ENCODE measurements at regions of chr2 and their contacts with region 1.

Region 1: DNA sequence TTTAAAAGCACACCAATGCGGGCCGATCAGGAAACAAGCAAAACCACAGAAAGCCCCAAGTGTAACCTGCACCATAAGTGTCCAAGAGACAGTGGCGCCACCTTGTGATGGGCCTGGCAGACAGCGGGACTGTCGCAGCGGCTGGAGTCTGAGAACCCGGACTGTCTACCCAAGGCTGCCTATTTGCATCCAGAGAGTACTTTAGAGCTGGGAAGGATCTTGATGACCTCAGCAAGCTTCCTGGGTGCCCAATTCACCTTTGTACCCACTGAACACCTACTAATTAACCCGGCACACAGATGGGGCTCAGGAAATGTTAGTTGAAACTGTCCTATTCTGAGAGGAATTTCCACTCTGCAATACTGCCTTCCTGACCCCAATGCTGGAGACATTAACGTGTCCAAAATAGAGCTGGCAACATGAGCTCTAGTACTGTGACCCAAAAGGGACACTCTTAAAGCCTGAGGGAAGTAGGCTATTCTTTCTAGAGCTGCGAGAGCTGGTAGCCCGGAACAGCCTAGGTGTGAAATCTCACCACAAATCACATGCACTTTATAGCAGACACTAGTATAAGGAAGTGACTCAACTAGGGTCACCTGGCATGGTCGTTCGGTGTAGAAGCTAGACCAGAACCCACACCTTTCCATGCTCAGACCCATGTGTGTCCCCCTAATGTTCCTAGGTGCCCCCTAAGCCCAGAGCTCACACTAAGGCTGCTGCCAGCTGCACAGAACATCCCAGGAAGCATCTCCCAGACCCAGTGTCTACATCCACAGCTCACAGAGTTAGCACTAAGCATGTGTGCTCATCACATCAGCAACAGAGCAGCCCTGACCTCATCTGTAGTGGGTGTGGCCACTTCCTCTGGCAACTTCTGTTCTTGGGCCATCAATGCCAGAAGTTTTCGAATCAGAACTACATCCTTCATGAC is 25.4 kb downstream of the POLR1A start:
- DNase-seq: peak; percentile 92
- H3K4me3 Mint-ChIP-seq: no peak overlapping the region
- H3K27ac Mint-ChIP-seq: peak overlapping the region; percentile 81
- H3K4me1 Mint-ChIP-seq: peaks cover 45% of the 10 kb centered on the region
- H3K27me3 Mint-ChIP-seq: no peaks in the 10 kb centered on the region

Region 2: GRCh38 chr2:85409845-85410583 is 670.2 kb before region 1 on chr2 and contains the start of gene CAPG:
- CTCF ChIA-PET with region 1: no interaction called
- DNase-seq: peak; percentile 76
- H3K4me3 Mint-ChIP-seq: peak within 1 kb of the TSS; percentile 78
- H3K27ac Mint-ChIP-seq: peak within 1 kb of the TSS; percentile 71
- H3K4me1 Mint-ChIP-seq: peaks cover 89% of the 10 kb centered on the region
- H3K27me3 Mint-ChIP-seq: peaks cover 27% of the 10 kb centered on the region

Region 3: GRCh38 chr2:85728883-85729824 is 351.1 kb before region 1 on chr2:
- CTCF ChIA-PET with region 1: interaction called, 16 read pairs
- DNase-seq: peak; percentile 82
- H3K4me3 Mint-ChIP-seq: no peak overlapping the region
- H3K27ac Mint-ChIP-seq: no peak overlapping the region
- H3K4me1 Mint-ChIP-seq: peaks cover 3% of the 10 kb centered on the region
- H3K27me3 Mint-ChIP-seq: peaks cover 66% of the 10 kb centered on the region

Region 4: DNA sequence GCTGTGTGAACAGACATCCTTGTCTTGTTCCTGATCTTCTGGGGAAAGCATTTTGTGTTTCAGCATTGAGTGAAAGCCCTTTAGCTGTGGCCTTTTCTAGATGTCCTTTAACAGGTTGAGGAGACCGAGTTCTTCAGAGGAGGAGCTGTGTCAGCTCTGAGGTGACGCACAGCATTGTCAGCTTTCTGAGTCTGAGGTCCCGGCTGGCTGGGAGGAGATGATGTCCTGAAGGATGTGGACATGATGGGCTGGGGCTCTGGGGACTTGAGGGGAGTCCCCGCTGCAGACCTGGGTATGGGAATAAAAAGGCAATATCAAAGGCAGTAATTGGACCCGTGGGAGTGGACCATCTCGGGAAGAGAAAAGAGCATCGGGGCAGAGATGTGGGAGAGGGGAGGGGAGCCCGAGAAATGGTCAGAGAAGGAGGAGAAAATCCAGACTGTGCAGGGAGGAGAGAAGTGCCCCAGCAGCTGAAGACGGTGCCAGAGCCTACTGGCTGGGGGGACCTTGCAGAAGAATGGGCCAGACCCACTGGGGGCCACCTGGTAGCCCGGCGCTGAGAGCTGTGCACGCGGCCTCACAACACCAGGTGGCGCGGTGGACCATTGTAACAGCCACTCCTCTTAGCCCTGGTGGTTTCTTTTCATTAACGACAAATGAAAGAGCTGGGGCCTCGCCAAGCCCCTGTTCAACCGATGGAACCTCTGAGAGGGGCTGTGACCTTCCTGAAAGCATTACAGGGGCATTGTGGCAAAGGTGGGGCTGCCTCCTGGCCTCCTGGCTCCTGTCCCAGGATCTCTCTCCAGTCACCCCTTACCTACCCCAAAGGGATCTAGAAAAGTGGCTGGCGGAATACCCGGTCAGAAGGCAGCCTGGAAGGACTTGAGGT is 253.0 kb before region 1 on chr2:
- CTCF ChIA-PET with region 1: interaction called, 420 read pairs
- DNase-seq: peak; percentile 88
- H3K4me3 Mint-ChIP-seq: no peak overlapping the region
- H3K27ac Mint-ChIP-seq: no peak overlapping the region
- H3K4me1 Mint-ChIP-seq: peaks cover 33% of the 10 kb centered on the region
- H3K27me3 Mint-ChIP-seq: peaks cover 31% of the 10 kb centered on the region

Region 5: DNA sequence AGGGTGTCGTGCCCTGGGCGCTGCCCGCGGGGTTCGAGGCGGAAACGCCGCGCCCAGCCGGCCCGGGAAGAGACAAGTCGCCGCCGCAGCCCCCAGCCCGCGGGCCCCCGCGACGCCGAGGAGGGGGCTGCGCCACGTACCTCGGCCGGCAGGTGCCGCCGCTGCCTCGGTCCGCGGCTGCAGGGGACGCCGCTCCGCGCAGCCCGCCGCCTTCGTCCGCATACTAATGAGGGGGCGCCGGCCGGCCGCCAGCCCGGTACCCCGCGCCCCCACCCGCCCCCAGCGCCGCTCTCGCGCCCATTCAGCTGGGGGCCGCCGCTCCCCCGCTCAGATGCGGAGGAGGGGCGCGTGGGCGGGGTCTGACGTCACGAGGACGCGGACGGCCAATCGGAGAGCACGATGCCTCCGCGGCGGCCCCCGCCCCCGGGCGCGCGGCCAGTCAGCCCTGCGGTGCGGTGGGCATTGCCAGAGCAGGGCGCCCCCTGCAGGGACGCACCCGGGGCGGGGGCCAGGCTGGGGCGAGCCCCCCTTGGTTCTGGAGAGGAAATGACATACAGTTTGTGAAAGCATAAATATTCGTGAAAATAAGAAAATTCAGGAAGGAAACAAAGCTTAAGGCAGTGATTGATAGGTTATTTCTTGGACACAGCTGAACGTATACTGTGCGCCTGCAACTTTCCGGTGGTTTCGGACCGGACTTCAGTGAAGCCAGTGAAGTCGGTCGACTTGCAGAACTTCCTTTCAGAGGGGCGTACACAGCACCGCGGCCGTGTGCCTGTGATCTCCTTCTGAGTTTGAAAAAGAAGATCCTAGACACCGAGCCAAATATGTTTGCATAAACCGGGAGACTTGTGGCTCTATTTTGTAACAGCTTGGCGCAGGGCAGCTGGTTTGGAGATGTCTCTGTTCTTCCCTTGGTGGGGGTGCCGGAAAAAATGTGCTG is 191.3 kb before region 1 on chr2 and contains the start of gene ST3GAL5:
- CTCF ChIA-PET with region 1: interaction called, 116 read pairs
- DNase-seq: peak; percentile 95
- H3K4me3 Mint-ChIP-seq: peak within 1 kb of the TSS; percentile 87
- H3K27ac Mint-ChIP-seq: peak within 1 kb of the TSS; percentile 93
- H3K4me1 Mint-ChIP-seq: peaks cover 68% of the 10 kb centered on the region
- H3K27me3 Mint-ChIP-seq: peaks cover 4% of the 10 kb centered on the region

Region 6: GRCh38 chr2:86042256-86043168 is 37.7 kb before region 1 on chr2:
- CTCF ChIA-PET with region 1: interaction called, 44 read pairs
- DNase-seq: no peak
- H3K4me3 Mint-ChIP-seq: no peak overlapping the region
- H3K27ac Mint-ChIP-seq: peak overlapping the region; percentile 99
- H3K4me1 Mint-ChIP-seq: peaks cover 53% of the 10 kb centered on the region
- H3K27me3 Mint-ChIP-seq: no peaks in the 10 kb centered on the region

Region 7: GRCh38 chr2:86140969-86141392 is 60.7 kb after region 1 on chr2:
- CTCF ChIA-PET with region 1: no interaction called
- DNase-seq: no peak
- H3K4me3 Mint-ChIP-seq: no peak overlapping the region
- H3K27ac Mint-ChIP-seq: no peak overlapping the region
- H3K4me1 Mint-ChIP-seq: no peaks in the 10 kb centered on the region
- H3K27me3 Mint-ChIP-seq: no peaks in the 10 kb centered on the region